MCF 10A (cell line): ENCODE measurements at regions of chr19 and their contacts with region 1.

Region 1: DNA sequence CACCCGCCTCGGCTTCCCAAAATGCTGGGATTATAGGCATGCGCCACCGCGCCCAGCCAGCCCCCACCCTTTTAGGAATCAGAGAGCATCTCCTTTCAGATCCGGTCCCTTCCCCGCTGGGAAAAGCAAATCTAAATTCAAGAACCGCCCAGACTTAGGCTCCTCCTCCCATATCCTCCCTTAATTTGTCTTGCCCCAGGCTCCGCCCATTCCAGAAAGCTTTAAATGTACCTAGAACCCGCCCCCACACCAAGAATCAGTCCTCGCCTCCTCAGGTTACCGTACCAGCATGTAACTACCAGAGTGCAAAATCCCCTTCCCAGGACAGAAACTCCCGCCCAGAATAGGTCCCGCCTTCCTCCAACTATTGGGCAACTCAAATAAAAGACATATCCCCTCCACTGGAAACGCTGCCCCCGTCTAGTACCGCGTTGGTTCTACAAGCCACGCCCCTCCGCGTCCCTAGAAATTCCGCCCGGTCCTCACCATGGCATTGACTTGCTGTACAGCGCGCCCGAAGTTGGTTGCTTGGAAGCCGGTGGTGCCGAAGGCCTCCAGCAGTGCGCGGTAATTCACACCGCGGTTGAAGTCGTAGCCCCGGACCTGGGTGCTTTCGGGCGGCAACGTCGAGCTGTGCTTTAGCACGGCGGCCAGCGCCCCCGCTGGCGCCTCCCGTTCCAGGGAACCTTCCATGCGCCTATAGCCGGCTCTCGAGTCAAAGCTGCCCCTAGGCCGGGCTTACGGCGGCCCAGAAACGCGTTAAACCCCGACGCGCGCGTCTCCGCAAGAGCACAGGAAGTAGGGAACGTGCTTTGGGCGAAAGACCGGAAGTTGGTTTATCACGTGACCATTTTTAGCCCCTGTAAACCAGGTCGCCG is at the start of gene DHPS:
- DNase-seq: peak; percentile 100
- H3K4me3 Mint-ChIP-seq: peak within 1 kb of the TSS; percentile 96
- H3K27ac Mint-ChIP-seq: peak within 1 kb of the TSS; percentile 97
- H3K4me1 Mint-ChIP-seq: peaks cover 5% of the 10 kb centered on the region
- H3K27me3 Mint-ChIP-seq: no peaks in the 10 kb centered on the region
- CTCF ChIP-seq: no peak
- total RNA-seq, gene DHPS: 74.2 and 85.8 TPM in 2 replicates

Region 2: DNA sequence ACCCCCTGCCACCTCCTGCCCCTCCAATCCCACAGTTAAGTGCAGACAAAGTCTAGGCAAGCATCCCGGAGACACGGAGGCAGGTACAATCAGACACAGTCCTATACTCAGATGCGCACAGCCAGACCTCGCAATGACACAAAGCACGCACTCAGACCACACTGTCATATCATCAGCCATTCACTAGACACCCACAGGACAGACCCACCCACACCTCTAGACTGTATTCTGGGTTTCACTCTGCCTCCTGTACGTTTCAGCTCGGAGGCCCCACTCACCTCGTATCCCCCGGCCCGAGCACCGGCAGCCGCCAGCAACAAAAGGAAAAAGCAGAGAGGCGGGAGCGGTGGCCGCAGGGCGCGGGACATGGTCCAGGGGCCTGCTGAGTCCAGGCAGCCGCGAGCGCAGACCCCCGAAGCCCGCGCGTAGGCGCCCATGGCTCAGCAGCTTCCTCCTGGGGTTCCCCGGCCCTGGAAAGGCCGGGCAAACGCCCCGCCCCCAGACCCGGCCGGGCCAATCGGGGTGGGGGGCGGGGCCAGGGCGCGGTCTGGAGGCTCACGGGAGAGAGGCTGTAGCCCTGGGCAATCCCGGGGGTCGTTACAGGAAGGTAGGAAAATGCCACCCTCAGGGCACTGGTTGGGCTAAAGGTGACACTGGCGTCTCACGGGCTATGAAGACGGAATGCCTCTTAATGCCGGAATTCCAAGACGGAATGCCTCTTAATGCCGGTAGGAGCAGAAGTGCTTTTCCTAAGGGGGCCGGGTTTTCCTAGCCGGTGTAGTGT is 14.9 kb before region 1 on chr19 and contains the starts of genes MAN2B1 and WDR83:
- CTCF ChIA-PET with region 1: interaction called, 20 read pairs
- POLR2A ChIA-PET with region 1: interaction called, 40 read pairs
- intact Hi-C with region 1: no loop called
- DNase-seq: peak; percentile 78
- H3K4me3 Mint-ChIP-seq: peak within 1 kb of the TSS; percentile 92
- H3K27ac Mint-ChIP-seq: peak within 1 kb of the TSS; percentile 89
- H3K4me1 Mint-ChIP-seq: peaks cover 7% of the 10 kb centered on the region
- H3K27me3 Mint-ChIP-seq: no peaks in the 10 kb centered on the region
- CTCF ChIP-seq: no peak
- total RNA-seq, gene MAN2B1: 53.8 and 67.0 TPM in 2 replicates
- total RNA-seq, gene WDR83: 9.3 and 11.7 TPM in 2 replicates

Region 3: DNA sequence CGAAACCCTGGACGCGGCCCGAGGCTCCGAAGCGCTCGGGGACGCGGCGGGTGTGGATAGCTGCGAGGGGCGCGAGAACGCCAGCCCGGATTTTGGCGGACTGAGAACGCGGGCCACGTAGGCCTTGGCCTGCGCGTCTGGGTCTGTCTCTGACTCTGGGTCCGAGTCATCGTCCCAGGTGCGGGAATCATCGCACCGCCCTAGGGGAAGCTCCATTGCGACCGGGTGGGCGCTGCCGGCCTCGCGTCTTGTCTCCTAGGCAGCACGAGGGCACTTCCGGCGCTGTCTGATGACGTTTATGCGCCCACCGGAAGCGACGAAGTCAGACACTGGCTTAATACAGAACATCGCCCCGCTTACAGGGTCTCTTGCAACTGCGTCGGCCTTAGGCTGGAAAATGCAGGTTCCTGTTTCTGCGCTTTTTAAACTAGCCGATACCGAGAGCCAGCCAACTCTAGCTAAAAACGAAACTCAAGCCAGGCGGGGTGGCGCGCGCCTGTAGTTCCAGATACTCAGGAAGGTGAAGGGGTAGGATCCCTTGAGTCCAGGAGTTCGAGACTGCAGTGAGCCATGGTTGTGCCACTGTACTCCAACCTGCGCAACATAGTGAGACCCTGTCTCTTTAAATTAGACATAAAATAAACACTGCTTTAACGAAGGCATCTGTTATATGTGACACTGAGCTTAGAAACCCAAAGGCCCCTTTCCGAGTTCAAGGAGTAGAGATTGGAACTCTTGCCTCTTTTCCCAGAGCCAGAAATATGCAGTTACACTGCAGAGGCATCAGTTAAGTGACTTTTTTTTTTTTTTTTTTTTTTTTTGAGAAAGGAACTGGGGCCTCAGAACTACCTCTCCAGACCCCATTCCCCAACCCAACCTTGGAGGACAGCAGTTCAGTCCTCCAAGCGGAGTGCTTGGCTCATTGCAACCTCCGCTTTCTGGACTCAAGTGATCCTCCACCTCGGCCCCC is 15.3 kb after region 1 on chr19 and contains the start of gene FBXW9:
- CTCF ChIA-PET with region 1: interaction called, 5 read pairs
- POLR2A ChIA-PET with region 1: interaction called, 19 read pairs
- intact Hi-C with region 1: loop called (anchors 1 kb)
- DNase-seq: peak; percentile 93
- H3K4me3 Mint-ChIP-seq: peak within 1 kb of the TSS; percentile 83
- H3K27ac Mint-ChIP-seq: peak within 1 kb of the TSS; percentile 75
- H3K4me1 Mint-ChIP-seq: peaks cover 5% of the 10 kb centered on the region
- H3K27me3 Mint-ChIP-seq: no peaks in the 10 kb centered on the region
- CTCF ChIP-seq: no peak
- total RNA-seq, gene FBXW9: 10.8 and 13.8 TPM in 2 replicates

Region 4: DNA sequence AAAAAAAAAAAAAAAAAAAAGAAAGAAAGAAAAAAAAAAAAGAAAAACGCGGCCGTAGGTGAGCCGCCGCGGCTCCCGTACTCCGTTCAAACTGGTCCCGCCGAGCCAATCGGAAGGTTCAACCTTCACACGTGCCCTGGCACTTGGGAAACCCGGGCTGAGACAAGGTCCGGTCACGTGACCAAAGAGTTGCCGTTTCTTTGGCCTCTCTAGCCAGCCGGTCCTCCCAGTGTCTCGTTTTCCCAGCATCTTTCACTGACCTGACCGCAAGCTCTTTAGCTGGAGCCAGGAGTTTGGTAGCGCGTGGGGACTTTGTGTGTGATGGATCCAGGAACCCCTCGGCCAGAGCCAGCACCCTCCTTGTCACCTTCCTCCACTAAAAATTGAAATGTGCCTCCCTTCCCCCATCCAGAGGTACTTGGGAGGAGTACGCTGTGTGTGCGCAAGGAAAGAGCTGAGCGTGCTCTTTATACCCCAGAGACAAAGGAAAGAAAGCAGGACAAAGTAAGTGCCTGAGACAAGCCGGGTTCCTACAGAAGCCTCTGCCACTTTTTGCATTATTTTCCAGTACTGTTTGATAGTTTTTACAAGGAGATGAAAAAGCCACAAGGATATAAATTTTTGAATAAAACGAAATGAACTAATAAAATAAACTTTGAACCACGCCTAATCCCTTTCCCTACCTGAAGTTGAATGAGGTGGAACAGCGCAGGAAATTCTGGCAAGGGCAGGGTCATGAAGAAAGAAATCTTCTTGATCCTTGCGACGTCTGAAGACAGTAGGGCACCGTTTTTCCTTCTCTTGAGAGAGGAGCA is 41.5 kb after region 1 on chr19:
- CTCF ChIA-PET with region 1: interaction called, 5 read pairs
- POLR2A ChIA-PET with region 1: interaction called, 17 read pairs
- intact Hi-C with region 1: no loop called
- DNase-seq: peak; percentile 100
- H3K4me3 Mint-ChIP-seq: peak overlapping the region; percentile 96
- H3K27ac Mint-ChIP-seq: peak overlapping the region; percentile 96
- H3K4me1 Mint-ChIP-seq: peaks cover 12% of the 10 kb centered on the region
- H3K27me3 Mint-ChIP-seq: no peaks in the 10 kb centered on the region
- CTCF ChIP-seq: no peak

Region 5: GRCh38 chr19:12796146-12797071 is 115.1 kb after region 1 on chr19:
- CTCF ChIA-PET with region 1: interaction called, 4 read pairs
- POLR2A ChIA-PET with region 1: interaction called, 5 read pairs
- intact Hi-C with region 1: loop called (anchors 1 kb)
- DNase-seq: peak; percentile 87
- H3K4me3 Mint-ChIP-seq: peak overlapping the region; percentile 35
- H3K27ac Mint-ChIP-seq: peak overlapping the region; percentile 84
- H3K4me1 Mint-ChIP-seq: peaks cover 18% of the 10 kb centered on the region
- H3K27me3 Mint-ChIP-seq: no peaks in the 10 kb centered on the region
- CTCF ChIP-seq: peak; percentile 94

Region 6: DNA sequence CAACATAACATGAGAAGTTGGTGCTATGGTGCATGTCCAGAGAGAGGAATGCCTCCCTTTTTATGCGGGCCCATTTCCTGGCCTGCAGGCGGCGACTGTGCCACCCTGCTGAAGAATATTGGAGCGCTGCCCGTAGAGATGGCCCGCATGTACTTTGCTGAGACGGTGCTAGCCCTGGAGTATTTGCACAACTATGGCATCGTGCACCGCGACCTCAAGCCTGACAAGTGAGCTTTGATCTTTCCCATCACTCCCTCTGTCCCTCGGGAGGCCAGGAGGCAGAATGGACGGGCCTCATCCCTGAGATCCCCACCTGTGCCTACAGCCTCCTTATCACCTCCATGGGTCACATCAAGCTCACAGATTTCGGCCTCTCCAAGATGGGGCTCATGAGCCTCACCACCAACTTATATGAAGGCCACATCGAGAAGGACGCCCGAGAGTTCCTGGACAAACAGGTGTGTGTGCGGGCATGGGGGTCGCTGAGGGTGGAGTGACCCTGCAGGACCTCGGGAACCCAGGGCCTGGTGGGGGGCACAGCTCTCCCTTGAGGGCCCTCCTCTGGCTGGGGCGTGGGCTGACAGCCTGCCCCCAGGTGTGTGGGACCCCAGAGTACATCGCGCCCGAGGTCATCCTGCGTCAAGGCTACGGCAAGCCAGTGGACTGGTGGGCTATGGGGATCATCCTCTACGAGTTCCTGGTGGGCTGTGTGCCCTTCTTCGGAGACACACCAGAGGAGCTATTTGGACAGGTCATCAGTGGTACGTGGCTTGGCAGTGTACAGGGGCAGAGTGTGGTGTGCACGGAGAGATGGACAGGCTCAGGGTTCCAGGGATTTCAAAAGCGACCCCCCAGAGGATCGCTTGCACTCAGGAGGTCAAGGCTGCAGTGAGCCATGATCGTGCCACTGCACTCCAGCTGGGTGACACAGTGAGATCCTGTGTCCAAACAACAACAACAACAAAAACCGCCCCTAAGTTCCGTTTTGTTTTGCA is 183.7 kb after region 1 on chr19:
- CTCF ChIA-PET with region 1: interaction called, 11 read pairs
- POLR2A ChIA-PET with region 1: no interaction called
- intact Hi-C with region 1: no loop called
- DNase-seq: no peak
- H3K4me3 Mint-ChIP-seq: no peak overlapping the region
- H3K27ac Mint-ChIP-seq: no peak overlapping the region
- H3K4me1 Mint-ChIP-seq: no peaks in the 10 kb centered on the region
- H3K27me3 Mint-ChIP-seq: no peaks in the 10 kb centered on the region
- CTCF ChIP-seq: no peak